ENCODE measurements at regions of chr2 and their contacts with region 1.

Region 1: GRCh38 chr2:144166743-144167142 is 353.2 kb downstream of the ZEB2 start:
- DNase-seq: no peak
- H3K4me3 Mint-ChIP-seq: no peak overlapping the region
- H3K27ac Mint-ChIP-seq: no peak overlapping the region
- H3K4me1 Mint-ChIP-seq: peaks cover 10% of the 10 kb centered on the region
- H3K27me3 Mint-ChIP-seq: no peaks in the 10 kb centered on the region

Region 2: DNA sequence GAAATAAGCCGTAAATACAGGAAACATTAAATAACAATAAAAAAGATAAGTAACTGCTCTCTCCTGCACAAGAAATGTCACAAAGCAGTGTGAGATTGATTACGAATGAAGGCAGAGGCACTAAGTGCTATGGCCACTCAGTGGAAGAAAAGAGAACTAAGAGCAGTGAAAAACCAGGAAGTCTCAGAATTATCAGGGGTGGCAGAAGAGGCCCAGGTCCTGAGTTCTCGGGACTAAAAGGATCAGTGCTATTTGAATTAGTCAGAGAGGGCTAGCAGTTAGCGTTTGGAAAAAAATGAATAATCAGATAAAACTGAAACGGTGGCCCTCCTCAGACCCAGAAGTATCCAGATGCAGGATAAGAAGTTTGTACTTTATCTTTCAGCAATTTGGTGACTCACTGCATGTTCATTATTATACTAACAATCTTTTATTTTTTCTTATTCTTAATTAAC is 13.9 kb before region 1 on chr2:
- intact Hi-C with region 1: no loop called
- DNase-seq: no peak
- H3K4me3 Mint-ChIP-seq: no peak overlapping the region
- H3K27ac Mint-ChIP-seq: no peak overlapping the region
- H3K4me1 Mint-ChIP-seq: peaks cover 6% of the 10 kb centered on the region
- H3K27me3 Mint-ChIP-seq: no peaks in the 10 kb centered on the region

Region 3: DNA sequence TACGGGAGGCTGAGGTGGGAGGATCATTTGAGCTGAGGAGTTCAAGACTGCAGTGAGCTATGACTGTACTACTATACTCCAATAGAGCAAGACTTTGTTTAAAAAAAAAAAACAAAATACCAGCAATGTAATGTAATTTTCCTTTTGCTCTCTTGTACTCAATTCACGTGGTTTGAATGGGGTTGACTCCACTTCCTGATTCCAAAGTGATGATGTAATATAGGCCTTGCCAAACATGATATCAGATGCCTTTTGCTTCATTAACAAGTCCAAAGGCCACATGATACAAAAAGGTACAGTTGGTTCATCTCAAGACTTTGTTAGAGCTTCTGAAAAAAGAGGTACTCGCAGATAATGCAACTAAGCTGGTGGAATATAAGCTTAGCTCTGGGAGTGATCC is 31.4 kb after region 1 on chr2:
- intact Hi-C with region 1: loop called (anchors 5 kb)
- DNase-seq: no peak
- H3K4me3 Mint-ChIP-seq: no peak overlapping the region
- H3K27ac Mint-ChIP-seq: peak overlapping the region; percentile 82
- H3K4me1 Mint-ChIP-seq: peaks cover 58% of the 10 kb centered on the region
- H3K27me3 Mint-ChIP-seq: no peaks in the 10 kb centered on the region

Measured in activated T-helper 2 cell treated with anti-CD3 and anti-CD28 coated beads, Interferon-gamma antibody, Interleukin-2, Interleukin-4, amounts not matched to agents 10 μg/mL and 5 μg/mL and 100 μg/mL, durations not matched to agents 14 hours and 24 hours and 36 hours (primary cell).